ENCODE measurements at regions of chr11 and their contacts with region 1.

Region 1: DNA sequence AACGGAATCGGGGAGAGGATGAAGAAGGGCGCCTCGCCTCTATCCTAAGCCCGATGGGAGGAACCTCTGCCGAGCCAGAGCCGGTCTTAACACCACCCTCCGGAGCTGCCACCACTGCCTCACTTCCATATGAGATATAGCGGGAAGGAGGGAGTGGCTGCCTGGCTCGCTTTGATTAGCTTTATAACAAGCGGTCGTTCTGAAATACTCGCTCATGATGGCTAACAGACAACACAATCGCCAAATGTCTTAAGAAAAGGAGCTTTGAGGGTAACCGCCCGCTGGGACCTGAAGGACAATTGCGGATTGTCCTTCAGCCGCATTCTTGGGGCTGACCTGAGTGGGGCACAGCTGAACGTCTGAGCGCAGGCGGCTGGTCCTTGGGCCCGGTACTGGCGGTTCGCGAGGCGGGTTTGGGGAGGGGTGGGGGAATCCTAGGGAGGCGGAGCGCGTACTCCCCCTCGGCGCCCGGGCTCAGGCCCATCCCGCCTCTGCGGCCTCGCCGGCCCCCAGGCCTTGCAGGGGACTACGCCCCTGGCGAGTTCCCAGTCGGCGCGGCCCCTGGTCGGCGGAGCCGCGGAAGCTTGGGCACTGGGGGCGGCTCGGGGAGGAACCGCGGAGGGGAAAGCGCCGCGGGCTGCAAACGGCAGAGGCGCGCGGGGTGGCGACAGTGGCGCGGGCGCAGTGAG is at the start of gene PLAAT5:
- DNase-seq: peak in 1 of 2 experiments; percentile 73
- H3K4me3 ChIP-seq: peak within 1 kb of the TSS; percentile 53 to 69 (median 61)
- H3K27ac ChIP-seq: 0 out of 2 replicates have a peak within 1 kb of the TSS, but pooled peaks have one; percentile 23
- H3K4me1 ChIP-seq: peaks cover 6 to 10% (median 9%) of the 10 kb centered on the region in 4 experiments; a peak in 5 of 7 replicates
- H3K27me3 ChIP-seq: no peaks in the 10 kb centered on the region; a peak in 1 of 7 replicates
- CTCF ChIP-seq: no peak
- EP300 ChIP-seq: no peak
- POLR2A ChIP-seq: no peak; a peak in 1 of 3 replicates
- RAD21 ChIP-seq: no peak
- total RNA-seq, gene PLAAT5: 12.8 and 16.0 TPM in 2 replicates

Region 2: DNA sequence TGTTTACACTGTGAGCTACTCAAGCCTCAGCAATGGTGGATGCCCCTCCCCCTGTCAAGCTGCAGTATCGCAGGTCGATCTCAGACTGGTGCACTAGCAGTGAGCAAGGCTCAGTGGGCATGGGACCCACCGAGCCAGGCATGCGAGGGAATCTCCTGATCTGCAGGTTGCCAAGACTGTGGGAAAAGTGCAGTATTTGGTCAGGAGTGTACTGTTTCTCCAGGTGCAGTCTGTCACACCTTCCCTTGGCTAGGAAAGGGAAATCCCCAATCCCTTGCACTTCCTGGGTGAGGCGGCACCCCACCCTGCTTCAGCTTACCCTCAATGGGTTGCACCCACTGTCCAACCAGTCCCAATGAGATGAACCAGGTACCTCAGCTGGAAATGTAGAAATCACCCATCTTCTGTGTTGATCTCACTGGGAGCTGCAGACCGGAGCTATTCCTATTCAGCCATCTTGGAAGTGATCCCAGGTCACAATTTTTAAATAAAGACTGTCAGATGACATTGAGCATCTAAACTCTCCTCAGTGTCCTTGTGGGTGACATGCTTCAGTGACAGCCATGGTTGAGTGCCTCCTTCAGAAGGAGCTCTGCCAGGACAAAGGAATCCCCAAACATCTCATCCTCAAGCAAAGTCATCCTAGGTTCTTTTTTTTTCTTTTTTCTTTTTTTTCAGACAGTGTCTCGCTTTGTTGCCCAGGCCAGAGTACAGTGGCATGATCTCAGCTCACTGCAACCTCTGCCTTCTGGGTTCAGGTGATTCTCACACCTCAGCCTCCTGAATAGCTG is 357.5 kb before region 1 on chr11:
- CTCF ChIA-PET with region 1: no interaction called
- POLR2A ChIA-PET with region 1: no interaction called
- DNase-seq: no peak
- H3K4me3 ChIP-seq: no peak overlapping the region
- H3K27ac ChIP-seq: no peak overlapping the region
- H3K4me1 ChIP-seq: 0 out of 7 replicates have a peak, but pooled peaks cover 0 to 3% (median 0%) of the 10 kb centered on the region in 4 experiments
- H3K27me3 ChIP-seq: no peaks in the 10 kb centered on the region
- CTCF ChIP-seq: no peak
- EP300 ChIP-seq: no peak
- POLR2A ChIP-seq: no peak
- RAD21 ChIP-seq: no peak

Region 3: GRCh38 chr11:63530021-63530420 is 39.3 kb after region 1 on chr11:
- CTCF ChIA-PET with region 1: interaction called, 3 read pairs
- POLR2A ChIA-PET with region 1: interaction called, 10 read pairs
- DNase-seq: no peak
- H3K4me3 ChIP-seq: peak overlapping the region in 3 of 4 experiments; percentile 11 to 37 (median 22); a peak in 4 of 8 replicates
- H3K27ac ChIP-seq: peak overlapping the region; percentile 89
- H3K4me1 ChIP-seq: peaks cover 16 to 31% (median 30%) of the 10 kb centered on the region in 4 experiments; a peak in 6 of 7 replicates
- H3K27me3 ChIP-seq: no peaks in the 10 kb centered on the region
- CTCF ChIP-seq: no peak
- EP300 ChIP-seq: no peak
- POLR2A ChIP-seq: no peak
- RAD21 ChIP-seq: no peak

Measured in H1 (cell line).